PC-9 (cell line): ENCODE measurements at regions of chr5 and their contacts with region 1.

Region 1: DNA sequence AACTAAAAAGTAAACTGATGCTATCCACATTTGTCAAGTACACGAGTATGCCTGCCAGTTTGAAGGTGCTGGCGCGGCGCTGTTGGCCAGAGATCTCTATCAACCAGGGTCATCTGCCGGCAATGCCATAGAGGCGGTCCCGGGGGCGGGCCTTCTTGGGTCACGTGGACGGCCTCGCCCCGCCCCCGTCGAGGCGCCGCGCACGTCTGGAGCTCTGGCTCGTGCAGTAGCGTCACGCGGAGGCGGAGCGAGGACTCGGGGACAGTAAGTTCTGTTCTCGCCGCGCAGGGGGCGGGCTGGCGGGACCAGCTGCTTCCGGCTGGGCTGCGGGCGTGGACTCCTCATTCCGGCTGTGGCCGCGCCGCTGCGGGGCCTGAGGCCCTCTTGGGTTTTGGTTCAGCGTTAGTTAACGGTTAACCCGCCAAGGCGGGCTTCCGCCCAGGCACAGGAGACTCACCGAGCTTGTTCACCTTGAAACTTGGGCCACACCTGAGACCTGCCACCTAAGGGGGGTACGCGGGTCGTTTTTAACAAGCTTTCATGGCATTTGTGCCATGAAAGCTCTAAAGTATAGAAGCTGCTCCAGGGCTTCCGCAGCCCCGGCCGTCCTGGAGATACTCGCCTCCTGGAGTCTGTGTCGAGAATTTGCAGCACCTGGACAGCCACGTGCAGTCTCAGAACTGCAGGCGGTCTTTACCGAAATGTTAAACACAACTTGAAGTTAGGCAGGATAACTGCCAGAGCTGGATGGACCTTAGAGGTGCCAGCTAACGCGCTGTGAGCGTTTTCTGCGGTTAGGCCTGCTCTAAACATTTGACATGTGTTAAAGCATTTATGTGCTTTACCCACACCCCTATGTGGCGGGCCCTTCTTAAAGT is at the start of gene RFESD:
- DNase-seq: peak; percentile 88 to 93
- H3K4me3 ChIP-seq: peak within 1 kb of the TSS; percentile 89
- H3K27ac ChIP-seq: peak within 1 kb of the TSS; percentile 75
- H3K4me1 ChIP-seq: peaks cover 16% of the 10 kb centered on the region
- H3K27me3 ChIP-seq: no peaks in the 10 kb centered on the region
- CTCF ChIP-seq: peak; percentile 36; the same call in 1 of the 2 replicates
- total RNA-seq, gene RFESD: 4.6 and 5.0 TPM in 2 replicates

Region 2: GRCh38 chr5:95712347-95712958 is 65.7 kb after region 1 on chr5:
- CTCF ChIA-PET with region 1: no interaction called
- POLR2A ChIA-PET with region 1: no interaction called
- intact Hi-C with region 1: loop called (anchors 2 kb)
- DNase-seq: peak; percentile 86 to 99
- H3K4me3 ChIP-seq: no peak overlapping the region
- H3K27ac ChIP-seq: peak overlapping the region; percentile 74
- H3K4me1 ChIP-seq: peaks cover 47% of the 10 kb centered on the region
- H3K27me3 ChIP-seq: no peaks in the 10 kb centered on the region
- CTCF ChIP-seq: no peak

Region 3: DNA sequence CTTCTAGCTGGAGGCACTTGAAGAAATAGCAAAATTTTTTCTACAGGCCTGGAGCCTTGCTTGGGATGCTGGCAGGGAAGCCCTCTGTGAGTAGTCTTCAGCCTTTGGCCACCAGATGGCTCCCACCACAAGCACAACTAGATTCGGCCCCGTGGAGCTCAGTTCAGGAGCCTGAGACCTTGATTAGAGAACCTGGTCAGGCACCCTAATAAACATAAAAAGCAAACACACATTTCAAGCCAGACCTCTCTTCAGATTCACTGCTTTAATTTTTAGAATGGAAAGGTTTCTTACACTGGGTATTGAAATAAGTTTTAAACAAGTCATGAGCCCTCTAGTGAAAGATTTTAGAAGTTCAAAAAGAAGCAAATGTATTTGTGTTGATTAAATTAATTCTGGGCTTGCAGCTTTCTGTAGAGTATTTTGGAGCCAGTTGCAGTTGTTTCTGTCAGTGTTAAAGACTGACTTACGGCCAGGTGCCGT is 134.3 kb after region 1 on chr5:
- CTCF ChIA-PET with region 1: interaction called, 6 read pairs
- POLR2A ChIA-PET with region 1: no interaction called
- intact Hi-C with region 1: loop called (anchors 1 kb)
- DNase-seq: peak; percentile 68 to 69
- H3K4me3 ChIP-seq: no peak overlapping the region
- H3K27ac ChIP-seq: no peak overlapping the region
- H3K4me1 ChIP-seq: no peaks in the 10 kb centered on the region
- H3K27me3 ChIP-seq: no peaks in the 10 kb centered on the region
- CTCF ChIP-seq: peak; percentile 97

Region 4: GRCh38 chr5:95961617-95962474 is 315.1 kb after region 1 on chr5 and contains the start of gene ELL2:
- CTCF ChIA-PET with region 1: no interaction called
- POLR2A ChIA-PET with region 1: no interaction called
- intact Hi-C with region 1: loop called (anchors 10 kb)
- DNase-seq: peak; percentile 98
- H3K4me3 ChIP-seq: peak within 1 kb of the TSS; percentile 65
- H3K27ac ChIP-seq: peak within 1 kb of the TSS; percentile 76
- H3K4me1 ChIP-seq: peaks cover 57% of the 10 kb centered on the region
- H3K27me3 ChIP-seq: no peaks in the 10 kb centered on the region
- CTCF ChIP-seq: no peak
- total RNA-seq, gene ELL2: 25.5 and 27.6 TPM in 2 replicates

Region 5: DNA sequence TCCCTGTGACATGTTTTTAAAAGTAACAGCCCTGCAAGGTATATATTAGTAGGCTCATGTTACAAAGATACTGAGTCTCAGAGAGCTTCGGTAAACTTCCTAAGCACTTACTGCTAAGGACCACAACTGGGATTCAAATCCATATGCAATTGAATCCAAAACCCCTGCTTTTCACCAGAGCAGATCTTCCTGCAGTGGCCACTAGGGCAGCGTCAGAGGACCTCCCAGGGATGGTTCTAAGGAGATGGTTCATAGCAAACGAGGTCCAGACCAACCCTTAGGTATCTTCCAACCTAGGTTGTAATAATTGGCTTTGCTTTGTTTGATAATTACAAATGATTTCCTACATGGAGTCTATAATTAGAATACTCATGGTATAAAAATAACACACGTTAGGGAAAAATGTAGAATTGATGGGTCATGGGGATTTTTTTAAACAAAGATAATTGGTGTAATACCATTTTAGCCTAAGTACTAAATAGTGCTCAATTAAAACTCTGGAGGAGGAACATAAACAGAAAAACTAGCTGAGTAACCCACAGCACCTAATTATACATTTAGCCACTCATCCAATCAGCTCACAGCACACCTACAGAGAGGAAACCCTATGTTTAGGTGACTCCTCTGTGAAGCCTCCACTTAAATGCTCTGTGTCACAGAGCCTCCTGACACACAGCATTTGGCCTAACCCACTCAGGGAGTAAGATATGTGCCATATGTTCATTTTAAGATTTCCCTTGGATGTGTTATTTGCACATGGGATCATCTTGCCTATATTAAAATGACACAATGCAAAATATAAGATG is 1005.4 kb after region 1 on chr5:
- CTCF ChIA-PET with region 1: interaction called, 16 read pairs
- POLR2A ChIA-PET with region 1: no interaction called
- intact Hi-C with region 1: no loop called
- DNase-seq: peak in 1 of 2 experiments; percentile 18
- H3K4me3 ChIP-seq: peak overlapping the region; percentile 11; the same call in 1 of the 2 replicates
- H3K27ac ChIP-seq: peak overlapping the region; percentile 90
- H3K4me1 ChIP-seq: peaks cover 81% of the 10 kb centered on the region
- H3K27me3 ChIP-seq: no peaks in the 10 kb centered on the region
- CTCF ChIP-seq: peak; percentile 47; the same call in 1 of the 2 replicates